WTC11 (cell line): ENCODE measurements at regions of chr6 and their contacts with region 1.

Region 1: GRCh38 chr6:89371849-89372505 is 19.5 kb upstream of the UBE2J1 start:
- DNase-seq: peak; percentile 90
- ATAC-seq: peak; percentile 80
- H3K4me3 Mint-ChIP-seq: no peak overlapping the region
- H3K27ac Mint-ChIP-seq: no peak overlapping the region
- H3K4me1 Mint-ChIP-seq: peaks cover 20% of the 10 kb centered on the region
- H3K27me3 Mint-ChIP-seq: no peaks in the 10 kb centered on the region
- CTCF ChIP-seq: peak; percentile 87

Region 2: DNA sequence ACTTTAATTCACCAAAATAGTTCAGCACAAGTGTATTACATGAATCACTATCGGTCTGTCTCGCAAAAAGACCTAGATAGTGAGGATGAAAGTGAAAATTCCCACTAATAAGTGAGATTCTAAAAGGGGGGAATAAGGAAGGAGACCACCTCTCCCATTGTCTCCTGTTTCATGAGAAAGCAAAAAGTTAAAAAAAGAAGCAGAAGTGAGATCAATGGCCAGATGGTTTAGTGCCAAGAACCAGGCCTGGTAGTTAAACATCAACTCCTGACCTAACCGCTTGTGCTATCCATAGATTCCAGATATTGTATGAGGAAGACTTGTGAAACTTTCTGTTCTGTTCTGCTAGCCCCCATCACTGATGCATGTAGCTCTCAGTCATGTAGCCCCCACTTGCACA is 701.6 kb before region 1 on chr6:
- CTCF ChIA-PET with region 1: no interaction called
- POLR2A ChIA-PET with region 1: no interaction called
- DNase-seq: no peak
- ATAC-seq: no peak
- H3K4me3 Mint-ChIP-seq: no peak overlapping the region
- H3K27ac Mint-ChIP-seq: no peak overlapping the region
- H3K4me1 Mint-ChIP-seq: no peaks in the 10 kb centered on the region
- H3K27me3 Mint-ChIP-seq: no peaks in the 10 kb centered on the region
- CTCF ChIP-seq: no peak

Region 3: GRCh38 chr6:88982720-88983119 is 389.3 kb before region 1 on chr6:
- CTCF ChIA-PET with region 1: interaction called, 15 read pairs
- POLR2A ChIA-PET with region 1: no interaction called
- DNase-seq: no peak
- ATAC-seq: peak; percentile 67
- H3K4me3 Mint-ChIP-seq: no peak overlapping the region
- H3K27ac Mint-ChIP-seq: no peak overlapping the region
- H3K4me1 Mint-ChIP-seq: no peaks in the 10 kb centered on the region
- H3K27me3 Mint-ChIP-seq: peaks cover 61% of the 10 kb centered on the region
- CTCF ChIP-seq: peak; percentile 26; the same call in 1 of the 2 replicates

Region 4: DNA sequence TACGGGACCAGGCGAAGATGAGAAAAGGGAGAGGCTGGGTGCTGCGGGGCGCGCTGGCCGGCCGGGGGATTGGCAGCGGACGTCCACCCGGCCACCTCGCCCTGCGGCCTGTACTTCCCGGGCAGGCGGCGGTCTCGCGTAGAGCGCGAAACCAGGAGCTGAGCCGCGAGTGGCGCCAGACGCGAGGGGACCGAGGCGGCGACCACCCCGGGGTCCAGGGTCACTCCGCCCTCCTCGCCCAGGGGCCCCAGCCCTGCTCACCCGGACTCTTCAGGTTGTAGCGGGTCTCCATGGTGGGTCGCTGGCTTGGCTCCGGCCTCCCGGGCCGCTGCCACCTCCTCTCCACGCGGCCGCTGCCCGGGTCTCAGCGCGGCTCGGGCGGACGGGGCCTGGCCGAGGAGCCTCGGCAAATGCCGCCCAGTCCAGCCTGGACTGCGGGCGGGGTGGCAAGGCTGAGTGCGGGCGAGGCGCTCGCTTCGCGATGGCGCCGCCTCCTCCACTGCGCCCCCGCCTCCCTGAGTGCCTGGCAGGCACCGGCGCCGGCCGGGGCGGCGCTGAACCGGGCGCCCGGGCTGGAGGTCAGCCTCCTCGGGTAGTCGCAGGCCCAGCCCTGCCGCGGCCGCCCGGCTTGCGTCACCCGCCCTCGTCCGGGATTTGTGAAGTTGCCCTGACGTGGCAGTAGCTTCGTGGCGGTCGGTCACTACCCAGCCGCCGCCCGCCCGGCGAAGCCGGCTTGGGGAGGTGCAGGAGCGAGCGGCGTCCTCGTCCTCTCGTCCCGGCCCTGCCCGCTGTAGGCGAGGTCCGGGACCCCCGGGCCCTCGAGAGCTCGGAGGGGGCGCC is 19.5 kb before region 1 on chr6 and contains the start of gene UBE2J1:
- CTCF ChIA-PET with region 1: interaction called, 14 read pairs
- POLR2A ChIA-PET with region 1: no interaction called
- DNase-seq: peak; percentile 84
- ATAC-seq: peak; percentile 88
- H3K4me3 Mint-ChIP-seq: peak within 1 kb of the TSS; percentile 87
- H3K27ac Mint-ChIP-seq: peak within 1 kb of the TSS; percentile 38; the same call in 1 of the 2 replicates
- H3K4me1 Mint-ChIP-seq: peaks cover 37% of the 10 kb centered on the region
- H3K27me3 Mint-ChIP-seq: peaks cover 43% of the 10 kb centered on the region
- CTCF ChIP-seq: no peak
- total RNA-seq, gene UBE2J1: 9.9 to 12.3 TPM (median 9.9 TPM) in 3 replicates

Region 5: DNA sequence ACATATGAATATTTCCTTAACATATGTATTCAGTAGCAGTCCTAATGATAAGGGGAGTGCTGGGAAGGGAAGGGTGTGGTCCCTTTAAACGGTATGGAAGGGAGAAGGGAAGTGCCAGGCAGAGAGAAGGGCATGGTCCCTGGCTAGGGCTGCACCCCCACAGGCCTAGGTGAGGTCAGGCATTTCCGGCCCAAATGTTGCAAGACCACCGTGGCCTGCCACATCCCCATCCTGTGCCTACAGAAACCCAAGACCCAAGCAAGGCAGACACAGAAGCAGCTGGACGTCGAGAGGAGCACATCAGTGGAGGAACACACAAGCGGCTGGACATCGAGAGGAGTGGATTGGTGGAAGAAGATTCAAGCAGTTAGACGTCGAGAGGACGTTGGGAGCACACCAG is 34.2 kb after region 1 on chr6:
- CTCF ChIA-PET with region 1: interaction called, 34 read pairs
- POLR2A ChIA-PET with region 1: interaction called, 3 read pairs
- DNase-seq: no peak
- ATAC-seq: peak; percentile 12; the same call in 1 of the 2 replicates
- H3K4me3 Mint-ChIP-seq: no peak overlapping the region
- H3K27ac Mint-ChIP-seq: no peak overlapping the region
- H3K4me1 Mint-ChIP-seq: peaks cover 62% of the 10 kb centered on the region
- H3K27me3 Mint-ChIP-seq: peaks cover 11% of the 10 kb centered on the region
- CTCF ChIP-seq: no peak

Region 6: GRCh38 chr6:89432875-89433251 is 60.9 kb after region 1 on chr6 and contains the start of gene ANKRD6:
- CTCF ChIA-PET with region 1: interaction called, 23 read pairs
- POLR2A ChIA-PET with region 1: no interaction called
- DNase-seq: peak; percentile 84
- ATAC-seq: peak; percentile 87
- H3K4me3 Mint-ChIP-seq: peak within 1 kb of the TSS; percentile 83
- H3K27ac Mint-ChIP-seq: no peak within 1 kb of the TSS
- H3K4me1 Mint-ChIP-seq: peaks cover 33% of the 10 kb centered on the region
- H3K27me3 Mint-ChIP-seq: peaks cover 42% of the 10 kb centered on the region
- CTCF ChIP-seq: peak; percentile 97
- total RNA-seq, gene ANKRD6: 10.9 to 13.9 TPM (median 12.6 TPM) in 3 replicates

Region 7: GRCh38 chr6:89604653-89605052 is 232.7 kb after region 1 on chr6:
- CTCF ChIA-PET with region 1: interaction called, 18 read pairs
- POLR2A ChIA-PET with region 1: no interaction called
- DNase-seq: peak; percentile 28
- ATAC-seq: peak; percentile 88
- H3K4me3 Mint-ChIP-seq: no peak overlapping the region
- H3K27ac Mint-ChIP-seq: no peak overlapping the region
- H3K4me1 Mint-ChIP-seq: 0 out of 2 replicates have a peak, but pooled peaks cover under 1% of the 10 kb centered on the region
- H3K27me3 Mint-ChIP-seq: no peaks in the 10 kb centered on the region
- CTCF ChIP-seq: no peak

Region 8: GRCh38 chr6:89638320-89639195 is 266.6 kb after region 1 on chr6 and contains the start of gene LYRM2:
- CTCF ChIA-PET with region 1: interaction called, 14 read pairs
- POLR2A ChIA-PET with region 1: no interaction called
- DNase-seq: peak; percentile 94
- ATAC-seq: peak; percentile 92
- H3K4me3 Mint-ChIP-seq: peak within 1 kb of the TSS; percentile 94
- H3K27ac Mint-ChIP-seq: peak within 1 kb of the TSS; percentile 98
- H3K4me1 Mint-ChIP-seq: peaks cover 14% of the 10 kb centered on the region
- H3K27me3 Mint-ChIP-seq: no peaks in the 10 kb centered on the region
- CTCF ChIP-seq: no peak
- total RNA-seq, gene LYRM2: 21.3 to 22.2 TPM (median 21.8 TPM) in 3 replicates

Region 9: DNA sequence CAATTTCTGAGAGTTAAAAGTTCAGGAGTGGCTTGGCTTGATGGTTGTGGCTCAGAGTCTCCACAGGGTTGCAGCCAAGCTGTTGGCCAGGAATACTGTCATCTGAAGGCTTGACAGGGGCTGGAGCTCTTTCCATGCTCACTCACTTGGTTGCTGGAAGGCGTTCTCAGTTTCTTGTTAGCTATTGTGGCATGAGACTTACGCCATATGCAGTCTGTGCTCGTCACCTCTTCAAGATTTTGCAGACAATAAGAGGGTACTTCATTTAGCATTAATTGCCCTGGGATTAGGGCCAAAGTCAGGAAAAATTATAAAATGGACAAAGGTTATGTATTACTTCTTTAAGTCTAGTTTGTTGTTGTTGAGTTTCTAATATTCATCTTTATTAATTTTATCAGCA is 1595.5 kb after region 1 on chr6:
- CTCF ChIA-PET with region 1: no interaction called
- POLR2A ChIA-PET with region 1: no interaction called
- DNase-seq: no peak
- ATAC-seq: no peak
- H3K4me3 Mint-ChIP-seq: no peak overlapping the region
- H3K27ac Mint-ChIP-seq: no peak overlapping the region
- H3K4me1 Mint-ChIP-seq: peaks cover 15% of the 10 kb centered on the region
- H3K27me3 Mint-ChIP-seq: peaks cover 11% of the 10 kb centered on the region
- CTCF ChIP-seq: no peak